Caco-2 (cell line): ENCODE measurements at regions of chr5 and their contacts with region 1.

Region 1: GRCh38 chr5:108260117-108260857 is 121.6 kb downstream of the FBXL17 start:
- DNase-seq: peak; percentile 71 to 77
- H3K4me3 ChIP-seq: no peak overlapping the region
- H3K4me3 Mint-ChIP-seq: no peak overlapping the region
- H3K27ac Mint-ChIP-seq: no peak overlapping the region
- H3K4me1 ChIP-seq: 0 out of 2 replicates have a peak, but pooled peaks cover 5% of the 10 kb centered on the region
- H3K4me1 Mint-ChIP-seq: peaks cover 22% of the 10 kb centered on the region
- H3K27me3 ChIP-seq: no peaks in the 10 kb centered on the region
- H3K27me3 Mint-ChIP-seq: no peaks in the 10 kb centered on the region
- CTCF ChIP-seq: peak; percentile 85 to 91

Region 2: DNA sequence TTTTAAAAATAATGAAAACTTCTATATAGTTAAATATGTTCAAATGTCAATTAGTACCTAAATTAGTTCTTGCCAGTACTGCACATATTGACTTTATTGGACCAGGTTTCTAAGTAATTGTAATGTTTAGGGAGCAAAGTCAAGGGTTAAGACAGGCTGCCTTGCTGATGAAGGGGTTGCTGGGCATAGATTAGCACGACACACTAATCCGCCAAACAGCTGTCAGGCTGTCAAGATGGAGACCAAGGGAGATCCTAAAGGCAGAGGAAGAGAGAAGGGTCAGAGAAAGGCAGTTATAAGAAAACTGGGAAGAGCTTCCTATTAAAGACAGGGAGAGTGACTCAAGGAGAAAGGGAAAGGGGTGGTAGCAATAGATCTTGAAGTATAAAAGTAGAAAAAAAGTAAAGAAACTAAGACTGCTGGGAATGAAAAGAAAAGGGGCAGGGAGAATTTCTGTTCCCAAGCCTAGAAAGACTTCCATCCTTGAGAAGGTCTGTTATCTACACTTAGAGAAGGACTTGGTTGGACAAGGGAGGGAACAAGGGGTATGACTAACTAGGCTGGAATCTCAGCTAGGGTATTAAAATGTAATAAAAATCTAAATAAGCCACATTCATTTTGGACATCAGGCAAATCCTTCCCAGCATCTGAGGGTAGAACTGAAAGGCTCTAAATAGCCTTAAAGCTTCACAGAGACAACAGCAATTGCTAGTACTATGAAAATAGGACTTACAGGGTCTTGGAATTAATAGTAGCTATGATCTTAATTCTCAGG is 67.1 kb before region 1 on chr5:
- CTCF ChIA-PET with region 1: no interaction called
- POLR2A ChIA-PET with region 1: no interaction called
- intact Hi-C with region 1: no loop called
- DNase-seq: no peak
- H3K4me3 ChIP-seq: no peak overlapping the region
- H3K4me3 Mint-ChIP-seq: no peak overlapping the region
- H3K27ac Mint-ChIP-seq: no peak overlapping the region
- H3K4me1 ChIP-seq: no peaks in the 10 kb centered on the region
- H3K4me1 Mint-ChIP-seq: peaks cover 7% of the 10 kb centered on the region
- H3K27me3 ChIP-seq: no peaks in the 10 kb centered on the region
- H3K27me3 Mint-ChIP-seq: no peaks in the 10 kb centered on the region
- CTCF ChIP-seq: no peak

Region 3: GRCh38 chr5:108321341-108321740 is 61.1 kb after region 1 on chr5:
- CTCF ChIA-PET with region 1: no interaction called
- POLR2A ChIA-PET with region 1: no interaction called
- intact Hi-C with region 1: no loop called
- DNase-seq: no peak
- H3K4me3 ChIP-seq: no peak overlapping the region
- H3K4me3 Mint-ChIP-seq: no peak overlapping the region
- H3K27ac Mint-ChIP-seq: no peak overlapping the region
- H3K4me1 ChIP-seq: 0 out of 2 replicates have a peak, but pooled peaks cover 3% of the 10 kb centered on the region
- H3K4me1 Mint-ChIP-seq: peaks cover 7% of the 10 kb centered on the region
- H3K27me3 ChIP-seq: no peaks in the 10 kb centered on the region
- H3K27me3 Mint-ChIP-seq: no peaks in the 10 kb centered on the region
- CTCF ChIP-seq: no peak

Region 4: DNA sequence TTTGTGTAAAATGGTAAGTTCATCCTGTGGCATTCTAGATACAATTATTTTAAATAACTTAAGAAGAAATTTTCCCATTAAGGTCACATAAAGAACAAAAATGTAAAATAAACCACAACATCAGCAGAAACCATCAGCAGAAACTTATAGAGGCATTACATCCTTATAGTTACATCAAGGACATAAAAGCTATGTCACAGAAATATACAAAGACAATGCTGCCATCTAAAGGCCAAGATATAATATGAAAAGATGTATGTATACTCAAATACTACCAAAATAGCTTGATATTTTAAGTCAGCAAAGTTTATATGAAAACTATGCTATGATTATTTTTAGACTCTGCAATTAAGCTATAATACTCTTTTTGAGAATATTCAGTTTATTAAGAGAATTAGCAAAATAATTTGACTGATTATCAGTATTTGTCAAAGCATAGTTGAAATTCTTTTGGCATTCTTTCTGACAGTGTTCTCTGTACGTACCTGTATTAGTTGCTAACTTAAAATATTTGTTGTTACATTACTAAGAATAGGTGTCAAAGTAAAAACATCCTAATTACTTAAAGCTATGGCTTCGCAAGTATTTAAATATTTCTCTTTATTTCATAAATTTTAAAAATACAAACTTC is 85.4 kb after region 1 on chr5:
- CTCF ChIA-PET with region 1: interaction called, 24 read pairs
- POLR2A ChIA-PET with region 1: no interaction called
- intact Hi-C with region 1: loop called (anchors 1 kb)
- DNase-seq: peak in 1 of 2 experiments; percentile 30
- H3K4me3 ChIP-seq: no peak overlapping the region
- H3K4me3 Mint-ChIP-seq: no peak overlapping the region
- H3K27ac Mint-ChIP-seq: no peak overlapping the region
- H3K4me1 ChIP-seq: no peaks in the 10 kb centered on the region
- H3K4me1 Mint-ChIP-seq: no peaks in the 10 kb centered on the region
- H3K27me3 ChIP-seq: no peaks in the 10 kb centered on the region
- H3K27me3 Mint-ChIP-seq: no peaks in the 10 kb centered on the region
- CTCF ChIP-seq: peak; percentile 21 to 34

Region 5: DNA sequence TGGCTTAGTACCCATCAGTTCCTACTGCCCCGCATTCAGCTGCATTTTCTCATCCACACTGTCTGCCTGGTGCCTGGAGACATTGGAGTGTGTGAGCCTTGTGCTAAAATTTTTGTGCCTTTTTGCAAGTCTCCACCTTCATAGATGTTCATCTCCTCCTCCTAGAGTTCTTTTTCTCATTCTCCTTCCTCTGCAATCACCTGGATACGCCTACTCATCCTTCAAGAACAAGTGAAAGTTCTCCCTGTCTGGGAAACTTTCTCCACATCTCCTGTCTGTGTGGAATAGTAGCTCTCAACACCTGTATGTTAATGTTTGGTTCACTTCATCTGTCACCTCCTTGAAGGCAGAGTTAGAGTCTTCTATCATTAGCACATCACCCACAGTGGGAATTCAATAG is 247.3 kb after region 1 on chr5:
- CTCF ChIA-PET with region 1: no interaction called
- POLR2A ChIA-PET with region 1: no interaction called
- intact Hi-C with region 1: no loop called
- DNase-seq: no peak
- H3K4me3 ChIP-seq: no peak overlapping the region
- H3K4me3 Mint-ChIP-seq: no peak overlapping the region
- H3K27ac Mint-ChIP-seq: no peak overlapping the region
- H3K4me1 ChIP-seq: no peaks in the 10 kb centered on the region
- H3K4me1 Mint-ChIP-seq: no peaks in the 10 kb centered on the region
- H3K27me3 ChIP-seq: no peaks in the 10 kb centered on the region
- H3K27me3 Mint-ChIP-seq: peaks cover 18% of the 10 kb centered on the region
- CTCF ChIP-seq: no peak